Dorsolateral prefrontal cortex (tissue), 120 donors: ENCODE measurements at regions of chr5 and their contacts with region 1.

Region 1: DNA sequence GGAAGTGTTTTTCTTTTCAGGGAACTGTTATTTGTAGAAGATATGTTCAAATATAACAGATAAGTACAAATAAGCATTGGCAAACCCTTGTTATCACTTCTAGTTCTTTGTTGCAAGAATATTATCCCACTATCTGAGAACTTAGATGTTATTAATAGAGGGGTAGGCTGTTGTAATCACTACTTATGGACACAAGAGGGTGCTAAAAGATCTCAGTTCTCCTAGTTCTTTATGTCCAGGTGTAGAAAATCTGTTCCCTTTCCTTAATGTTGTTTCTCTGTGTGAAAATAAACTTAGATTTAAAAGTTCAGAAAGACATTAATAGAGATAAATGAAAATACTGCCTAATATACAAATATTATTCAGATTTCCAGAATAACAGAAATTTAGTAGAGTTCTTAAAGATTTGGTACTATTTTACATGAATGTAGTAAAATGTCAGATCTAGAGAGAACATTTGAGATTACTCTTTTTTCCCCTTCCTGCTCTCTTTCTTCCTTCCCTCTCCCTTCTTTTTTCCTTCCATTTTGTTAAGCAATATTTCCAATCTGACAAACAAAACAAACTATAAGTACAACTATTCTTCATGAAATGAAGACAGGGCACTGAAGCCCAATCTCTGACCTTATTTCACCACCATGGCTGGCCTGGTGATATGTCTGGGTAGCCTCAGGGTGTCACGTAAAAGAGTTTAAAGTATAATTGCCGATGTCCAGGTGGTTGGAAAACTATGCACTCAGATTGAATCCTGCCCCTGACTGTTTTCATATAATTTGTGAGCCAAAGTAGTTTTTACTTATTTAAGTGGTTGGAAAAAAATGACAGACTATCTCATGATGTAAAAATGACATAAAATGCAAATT is 43.6 kb upstream of the C5orf46 start:
- DNase-seq: no peak
- H3K4me3 ChIP-seq: no peak overlapping the region
- H3K27ac ChIP-seq: no peak overlapping the region
- H3K27me3 ChIP-seq: no peaks in the 10 kb centered on the region
- CTCF ChIP-seq: peak; percentile 50 to 89 (median 74)

Region 2: GRCh38 chr5:148120317-148120716 is 170.4 kb after region 1 on chr5:
- intact Hi-C with region 1: loop called (anchors 2 to 5 kb)
- DNase-seq: no peak
- H3K4me3 ChIP-seq: peak overlapping the region in 1 of 59 donors; percentile 9
- H3K27ac ChIP-seq: peak overlapping the region in 29 of 59 donors; percentile 2 to 75 (median 48)
- H3K27me3 ChIP-seq: no peaks in the 10 kb centered on the region
- CTCF ChIP-seq: no peak